ENCODE measurements at regions of chr17 and their contacts with region 1.

Region 1: GRCh38 chr17:36629252-36629847 is 28.0 kb downstream of the MRM1 start:
- DNase-seq: peak; percentile 37
- H3K4me3 ChIP-seq: no peak overlapping the region
- H3K27ac ChIP-seq: no peak overlapping the region
- H3K4me1 ChIP-seq: no peaks in the 10 kb centered on the region
- H3K27me3 ChIP-seq: no peaks in the 10 kb centered on the region
- CTCF ChIP-seq: peak; percentile 97 to 98

Region 2: GRCh38 chr17:36608794-36609497 is 20.4 kb before region 1 on chr17:
- CTCF ChIA-PET with region 1: no interaction called
- dilution Hi-C with region 1: no loop called
- in situ Hi-C with region 1: no loop called
- intact Hi-C with region 1: loop called (anchors 1 kb)
- DNase-seq: peak; percentile 70
- H3K4me3 ChIP-seq: no peak overlapping the region
- H3K27ac ChIP-seq: no peak overlapping the region
- H3K4me1 ChIP-seq: peaks cover 22% of the 10 kb centered on the region
- H3K27me3 ChIP-seq: no peaks in the 10 kb centered on the region
- CTCF ChIP-seq: peak in 1 of 2 donors; percentile 56

Region 3: GRCh38 chr17:36948717-36949460 is 319.5 kb after region 1 on chr17 and contains the start of gene AATF:
- CTCF ChIA-PET with region 1: no interaction called
- dilution Hi-C with region 1: no loop called
- in situ Hi-C with region 1: no loop called
- intact Hi-C with region 1: loop called (anchors 5 kb)
- DNase-seq: peak; percentile 95
- H3K4me3 ChIP-seq: peak within 1 kb of the TSS; percentile 78 to 86 (median 78)
- H3K27ac ChIP-seq: peak within 1 kb of the TSS; percentile 74
- H3K4me1 ChIP-seq: peaks cover 18% of the 10 kb centered on the region
- H3K27me3 ChIP-seq: peaks cover 28% of the 10 kb centered on the region
- CTCF ChIP-seq: no peak
- total RNA-seq, gene AATF: 21.2 to 70.3 TPM

Region 4: GRCh38 chr17:37220607-37220953 is 591.2 kb after region 1 on chr17:
- CTCF ChIA-PET with region 1: interaction called, 6 read pairs
- dilution Hi-C with region 1: no loop called
- in situ Hi-C with region 1: loop called in 1 of 2 experiments (anchors 25 kb)
- intact Hi-C with region 1: loop called (anchors 1 kb)
- DNase-seq: no peak
- H3K4me3 ChIP-seq: no peak overlapping the region
- H3K27ac ChIP-seq: no peak overlapping the region
- H3K4me1 ChIP-seq: no peaks in the 10 kb centered on the region
- H3K27me3 ChIP-seq: no peaks in the 10 kb centered on the region
- CTCF ChIP-seq: peak; percentile 20 to 64

Region 5: DNA sequence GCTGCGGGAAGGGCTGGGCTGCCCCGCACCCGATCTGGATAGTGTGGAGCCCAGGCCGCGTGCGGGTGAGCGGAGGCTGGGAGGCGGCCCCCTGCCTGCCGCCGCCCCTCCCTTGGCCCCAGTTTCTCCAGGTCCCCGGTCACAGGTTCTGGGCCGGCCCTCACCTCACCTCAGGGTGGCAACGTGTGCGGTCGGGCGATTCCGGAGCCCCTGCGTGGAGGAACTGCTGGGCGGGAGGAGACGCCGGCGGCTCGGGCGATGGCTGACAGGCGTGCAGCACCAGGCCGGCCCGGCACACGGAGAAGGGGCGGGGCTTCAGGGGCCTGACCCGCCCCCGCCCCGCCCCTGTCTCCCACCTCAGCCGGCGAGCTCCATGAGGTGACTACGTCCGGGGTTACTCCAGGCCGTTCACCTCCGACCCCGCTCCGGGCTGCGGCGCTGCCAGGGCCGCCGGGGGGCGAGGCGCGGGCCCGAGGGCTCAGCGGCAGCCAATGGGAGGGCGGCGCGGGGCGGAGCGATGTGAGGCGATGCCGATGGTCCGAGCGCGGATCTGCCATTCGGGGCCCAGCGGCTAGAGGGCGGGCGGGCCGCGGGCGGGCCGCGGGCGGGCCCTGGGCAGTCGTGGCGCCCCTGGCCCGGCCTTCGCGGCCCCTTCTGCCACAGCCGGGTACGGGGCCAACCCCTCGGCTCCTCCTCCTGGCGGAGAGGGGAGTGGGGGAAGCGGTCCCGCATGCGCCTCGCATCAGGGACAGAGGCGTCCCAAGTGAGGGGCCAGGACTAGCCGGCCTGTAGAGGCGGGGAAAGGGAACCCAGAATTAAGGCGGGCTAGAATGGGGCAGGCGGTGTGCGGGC is 729.7 kb after region 1 on chr17:
- CTCF ChIA-PET with region 1: no interaction called
- dilution Hi-C with region 1: no loop called
- in situ Hi-C with region 1: loop called in 1 of 2 experiments (anchors 25 kb)
- intact Hi-C with region 1: no loop called
- DNase-seq: peak; percentile 90
- H3K4me3 ChIP-seq: peak overlapping the region; percentile 73 to 86 (median 80)
- H3K27ac ChIP-seq: peak overlapping the region; percentile 48
- H3K4me1 ChIP-seq: peaks cover 43% of the 10 kb centered on the region
- H3K27me3 ChIP-seq: no peaks in the 10 kb centered on the region
- CTCF ChIP-seq: no peak